ENCODE measurements at regions of chr5 and their contacts with region 1.

Region 1: DNA sequence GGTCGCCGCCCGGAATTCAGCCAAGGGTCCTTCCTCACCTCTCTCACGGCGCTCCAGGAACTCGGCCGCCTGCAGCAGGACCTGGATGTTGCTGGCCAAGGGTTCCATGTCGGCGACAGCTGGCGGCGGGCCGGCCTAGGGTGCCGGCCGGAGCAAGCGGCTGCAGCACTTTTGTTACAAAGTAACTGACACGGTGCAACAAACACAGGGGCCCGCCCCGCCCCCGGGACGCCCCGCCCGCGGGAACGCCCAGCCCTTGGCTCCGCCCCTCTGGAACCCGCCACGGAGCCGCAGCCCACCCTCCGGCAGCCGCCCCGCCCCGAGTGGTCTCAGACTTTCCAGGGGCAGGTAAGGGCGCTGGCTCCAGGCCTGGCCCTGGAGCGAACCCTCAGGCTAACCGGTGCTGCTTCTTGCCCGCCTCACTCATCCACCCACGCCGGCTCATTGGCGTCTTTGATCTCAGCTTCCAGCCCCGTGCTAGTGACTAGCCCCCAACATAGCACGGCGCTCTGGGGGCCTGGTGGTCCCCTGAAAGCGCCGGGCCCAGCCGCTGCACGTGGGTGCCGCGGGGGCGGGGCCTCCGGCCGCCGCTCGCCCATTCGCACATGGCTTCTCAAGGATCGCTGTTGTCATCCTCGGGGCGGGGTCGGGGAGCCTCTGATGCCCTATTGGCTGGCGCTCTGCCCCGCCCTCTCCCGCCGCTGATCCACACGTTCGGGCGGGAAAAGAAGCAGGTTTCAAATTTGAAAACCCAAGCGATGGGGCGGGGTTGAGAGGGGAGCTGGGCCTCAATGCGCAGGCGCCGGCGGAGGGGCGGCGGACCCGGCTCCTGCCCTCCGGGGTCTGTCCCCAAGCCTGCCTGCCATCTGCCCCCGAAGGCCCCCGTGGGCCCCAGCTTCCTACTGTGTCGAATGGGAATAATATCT is at the start of gene MXD3:
- DNase-seq: peak; percentile 90 to 97
- ATAC-seq: peak; percentile 62 to 82
- H3K4me3 ChIP-seq: peak within 1 kb of the TSS; percentile 66
- H3K27ac ChIP-seq: peak within 1 kb of the TSS; percentile 87 to 93
- H3K4me1 ChIP-seq: peaks cover 19% of the 10 kb centered on the region; the same call in 2 of the 3 replicates
- CTCF ChIP-seq: no peak
- EP300 ChIP-seq: no peak
- POLR2A ChIP-seq: peak; percentile 22; the same call in 1 of the 2 replicates
- RAD21 ChIP-seq: no peak
- polyA plus RNA-seq, gene MXD3: 4.1 and 5.3 TPM in 2 replicates

Region 2: DNA sequence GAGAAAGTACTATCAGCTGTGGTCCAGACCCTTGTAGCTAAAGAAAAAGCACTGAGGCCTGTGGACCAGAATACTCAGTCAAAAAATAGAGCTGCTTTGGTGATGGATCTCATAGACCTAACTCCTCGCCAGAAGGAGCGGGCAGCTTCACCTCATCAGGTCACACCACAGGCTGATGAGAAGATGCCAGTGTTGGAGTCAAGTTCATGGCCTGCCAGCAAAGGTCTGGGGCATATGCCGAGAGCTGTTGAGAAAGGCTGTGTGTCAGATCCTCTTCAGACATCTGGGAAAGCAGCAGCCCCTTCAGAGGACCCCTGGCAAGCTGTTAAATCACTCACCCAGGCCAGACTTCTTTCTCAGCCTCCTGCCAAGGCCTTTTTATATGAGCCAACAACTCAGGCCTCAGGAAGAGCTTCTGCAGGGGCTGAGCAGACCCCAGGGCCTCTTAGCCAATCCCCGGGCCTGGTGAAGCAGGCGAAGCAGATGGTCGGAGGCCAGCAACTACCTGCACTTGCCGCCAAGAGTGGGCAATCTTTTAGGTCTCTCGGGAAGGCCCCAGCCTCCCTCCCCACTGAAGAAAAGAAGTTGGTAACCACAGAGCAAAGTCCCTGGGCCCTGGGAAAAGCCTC is 17.2 kb before region 1 on chr5:
- CTCF ChIA-PET with region 1: interaction called, 28 read pairs
- POLR2A ChIA-PET with region 1: no interaction called
- DNase-seq: no peak
- ATAC-seq: no peak
- H3K4me3 ChIP-seq: no peak overlapping the region
- H3K27ac ChIP-seq: no peak overlapping the region
- H3K4me1 ChIP-seq: no peaks in the 10 kb centered on the region; the same call in 2 of the 3 replicates
- CTCF ChIP-seq: no peak
- EP300 ChIP-seq: no peak
- POLR2A ChIP-seq: no peak
- RAD21 ChIP-seq: no peak

Region 3: DNA sequence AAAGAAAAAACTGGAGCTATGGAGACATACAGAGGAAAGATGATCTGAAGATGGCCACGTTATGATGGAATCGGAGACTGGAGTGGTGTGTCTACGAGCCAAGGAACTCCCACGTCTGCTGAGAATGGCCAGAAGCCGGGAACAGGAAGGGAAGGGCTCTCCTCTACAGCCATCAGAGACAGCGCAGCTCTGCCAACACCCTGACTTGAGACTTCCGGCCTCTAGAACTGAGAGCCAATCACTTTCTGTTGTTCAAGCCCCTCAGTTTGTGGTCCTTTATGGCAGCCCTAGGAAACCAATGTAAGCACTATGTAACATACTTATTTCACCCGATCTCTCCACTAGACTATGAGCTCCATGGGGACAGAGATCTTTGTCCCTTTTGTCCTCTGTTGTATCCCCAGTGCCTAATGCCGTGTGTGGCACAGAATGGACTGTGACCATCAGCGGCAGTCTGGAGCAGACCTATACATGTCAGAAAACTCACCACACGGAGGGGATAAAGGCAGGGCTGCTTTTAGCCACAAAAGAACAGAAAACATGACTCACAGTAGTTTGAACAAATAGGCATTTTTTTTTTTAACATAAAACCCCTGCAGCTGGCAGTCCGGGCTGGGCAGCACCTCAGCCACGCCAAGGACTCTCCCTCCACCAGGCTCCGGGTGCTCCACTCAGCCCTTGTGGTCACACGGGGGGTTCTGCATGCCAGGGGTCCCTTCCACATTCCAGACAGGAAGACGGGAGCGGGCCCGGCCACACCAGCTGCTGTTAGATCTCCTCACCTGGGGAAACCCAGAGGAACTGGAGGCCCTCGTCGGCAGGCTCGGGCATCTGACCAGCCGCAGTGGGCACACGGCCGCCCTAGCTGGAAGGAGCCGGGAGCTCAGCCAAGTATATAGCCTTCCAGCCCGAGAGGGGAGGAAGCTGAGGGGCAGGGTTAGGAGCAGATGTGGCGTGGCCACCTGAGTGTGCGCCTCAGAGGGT is 15.8 kb after region 1 on chr5:
- CTCF ChIA-PET with region 1: interaction called, 111 read pairs
- POLR2A ChIA-PET with region 1: no interaction called
- DNase-seq: no peak
- ATAC-seq: peak; percentile 28 to 57; a peak in 5 of 6 replicates
- H3K4me3 ChIP-seq: no peak overlapping the region
- H3K27ac ChIP-seq: peak overlapping the region; percentile 41 to 81
- H3K4me1 ChIP-seq: peaks cover 43% of the 10 kb centered on the region
- CTCF ChIP-seq: no peak
- EP300 ChIP-seq: no peak
- POLR2A ChIP-seq: no peak
- RAD21 ChIP-seq: no peak

Region 4: GRCh38 chr5:177336112-177336511 is 24.1 kb after region 1 on chr5:
- CTCF ChIA-PET with region 1: interaction called, 111 read pairs
- POLR2A ChIA-PET with region 1: no interaction called
- DNase-seq: peak; percentile 62 to 74
- ATAC-seq: peak; percentile 90 to 97
- H3K4me3 ChIP-seq: no peak overlapping the region
- H3K27ac ChIP-seq: no peak overlapping the region
- H3K4me1 ChIP-seq: 0 out of 3 replicates have a peak, but pooled peaks cover 10% of the 10 kb centered on the region
- CTCF ChIP-seq: peak; percentile 57
- EP300 ChIP-seq: no peak
- POLR2A ChIP-seq: no peak
- RAD21 ChIP-seq: peak; percentile 58 to 60